ENCODE measurements at regions of chr18 and their contacts with region 1.

Region 1: DNA sequence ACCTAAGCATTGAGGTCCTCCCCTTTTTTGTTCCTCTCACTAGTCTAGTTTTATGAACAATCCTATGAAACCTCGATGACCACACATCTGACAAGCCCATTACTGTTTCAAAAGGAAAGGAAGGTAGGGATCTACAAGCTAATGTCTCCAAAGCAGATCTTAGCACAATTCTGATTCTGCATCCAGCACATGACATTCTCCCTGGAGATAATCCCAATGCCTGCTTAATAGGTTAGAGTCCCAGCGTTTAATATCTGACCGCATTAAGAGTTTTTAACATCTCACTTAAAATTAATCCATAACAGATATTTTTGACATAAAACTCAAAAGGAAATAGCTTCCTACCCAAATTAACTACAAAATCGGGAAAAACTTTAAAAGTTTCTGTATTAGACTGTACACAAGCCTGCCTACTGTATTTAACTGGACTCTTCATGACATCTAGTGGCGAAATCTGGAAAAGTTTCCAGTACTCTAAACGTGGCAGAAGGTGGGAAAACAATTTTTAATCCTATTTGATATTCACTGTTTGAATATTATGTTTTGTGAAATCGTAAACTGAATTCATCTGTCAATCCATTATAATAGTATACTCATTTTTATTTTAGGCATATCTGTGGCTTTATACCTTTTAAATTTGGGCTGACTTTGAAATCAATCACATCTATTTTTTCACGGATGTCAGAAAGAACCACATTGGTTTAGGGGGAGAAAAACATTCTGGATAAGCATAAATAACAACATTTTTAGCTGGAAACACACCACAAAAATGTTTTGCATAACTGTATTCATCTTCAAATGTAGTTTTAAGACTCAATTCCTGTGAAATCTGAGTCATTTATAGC is 62.4 kb downstream of the TXNL1 start:
- DNase-seq: no peak
- ATAC-seq: peak; percentile 64 to 67
- H3K4me3 ChIP-seq: no peak overlapping the region
- H3K27ac ChIP-seq: peak overlapping the region; percentile 51 to 71 (median 66)
- H3K4me1 ChIP-seq: peaks cover 0 to 17% of the 10 kb centered on the region in 2 donors
- H3K27me3 ChIP-seq: no peaks in the 10 kb centered on the region
- CTCF ChIP-seq: peak; percentile 57 to 79 (median 59)
- POLR2A ChIP-seq: no peak

Region 2: GRCh38 chr18:55096261-55096951 is 1479.6 kb before region 1 on chr18:
- in situ Hi-C with region 1: loop called in 1 of 4 experiments (anchors 10 kb)
- intact Hi-C with region 1: loop called (anchors 5 kb)
- DNase-seq: no peak
- ATAC-seq: peak in 1 of 2 donors; percentile 66
- H3K4me3 ChIP-seq: no peak overlapping the region
- H3K27ac ChIP-seq: no peak overlapping the region
- H3K4me1 ChIP-seq: no peaks in the 10 kb centered on the region
- H3K27me3 ChIP-seq: no peaks in the 10 kb centered on the region
- CTCF ChIP-seq: peak in 4 of 5 experiments; percentile 6 to 38 (median 18)
- POLR2A ChIP-seq: no peak

Region 3: GRCh38 chr18:55415258-55415871 is 1160.7 kb before region 1 on chr18:
- in situ Hi-C with region 1: loop called in 2 of 4 experiments (anchors 10 kb)
- intact Hi-C with region 1: loop called (anchors 5 kb)
- DNase-seq: peak; percentile 73 to 80
- ATAC-seq: peak; percentile 77 to 81
- H3K4me3 ChIP-seq: no peak overlapping the region
- H3K27ac ChIP-seq: peak overlapping the region; percentile 11 to 92 (median 89)
- H3K4me1 ChIP-seq: peaks cover 60 to 69% of the 10 kb centered on the region in 2 donors
- H3K27me3 ChIP-seq: no peaks in the 10 kb centered on the region
- CTCF ChIP-seq: peak; percentile 77 to 95 (median 87)
- POLR2A ChIP-seq: no peak

Region 4: GRCh38 chr18:55861266-55861665 is 714.8 kb before region 1 on chr18:
- in situ Hi-C with region 1: no loop called
- intact Hi-C with region 1: loop called (anchors 10 kb)
- DNase-seq: no peak
- ATAC-seq: peak in 1 of 2 donors; percentile 33
- H3K4me3 ChIP-seq: no peak overlapping the region
- H3K27ac ChIP-seq: no peak overlapping the region
- H3K4me1 ChIP-seq: peaks cover 3 to 10% of the 10 kb centered on the region in 2 donors
- H3K27me3 ChIP-seq: peaks cover 40 to 53% (median 51%) of the 10 kb centered on the region in 3 donors
- CTCF ChIP-seq: peak in 3 of 5 experiments; percentile 20 to 32 (median 22)
- POLR2A ChIP-seq: no peak

Region 5: DNA sequence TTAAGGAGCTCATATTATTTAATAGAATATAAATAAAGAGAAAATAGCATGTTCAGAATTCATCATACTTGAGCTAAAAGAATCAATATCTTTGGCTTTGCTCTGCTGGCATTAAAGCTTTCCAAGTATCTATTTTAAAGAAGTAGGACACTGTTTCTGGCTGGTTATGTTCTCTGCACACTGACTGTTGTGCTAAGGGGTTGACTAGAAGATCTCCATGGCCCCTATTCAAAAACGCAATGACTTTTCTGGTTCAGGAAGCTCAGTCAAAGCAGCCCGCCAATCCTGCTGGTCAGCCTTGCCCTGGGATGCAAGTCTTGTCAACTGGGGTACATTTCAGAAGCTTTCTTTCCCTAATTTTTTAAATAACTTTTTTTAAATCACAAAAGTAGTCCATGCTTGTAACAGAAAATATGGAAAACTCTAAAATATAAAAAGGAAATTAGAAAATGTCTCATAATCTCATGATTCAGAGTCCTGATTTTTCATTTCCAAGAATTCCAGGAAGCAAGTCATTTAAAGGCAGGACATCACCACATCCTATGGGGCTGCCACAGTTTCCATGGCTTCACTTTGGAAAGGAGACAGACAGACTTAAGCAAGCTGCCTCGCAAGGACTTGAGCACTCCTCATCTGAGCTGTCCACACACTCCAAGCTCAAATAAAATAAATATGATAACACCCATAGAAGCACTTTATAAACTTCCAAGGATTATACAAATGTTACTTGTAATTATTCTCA is 132.7 kb before region 1 on chr18:
- in situ Hi-C with region 1: no loop called
- intact Hi-C with region 1: loop called (anchors 10 kb)
- DNase-seq: no peak
- ATAC-seq: peak in 1 of 2 donors; percentile 36
- H3K4me3 ChIP-seq: no peak overlapping the region
- H3K27ac ChIP-seq: peak overlapping the region in 2 of 4 donors; percentile 14 to 29
- H3K4me1 ChIP-seq: no peaks in the 10 kb centered on the region
- H3K27me3 ChIP-seq: no peaks in the 10 kb centered on the region
- CTCF ChIP-seq: no peak
- POLR2A ChIP-seq: no peak

Measured in gastrocnemius medialis (tissue), 4 donors.